Aorta (tissue), 5 donors: ENCODE measurements at regions of chr4 and their contacts with region 1.

Region 1: GRCh38 chr4:55125087-55125721 is at the start of gene KDR:
- DNase-seq: peak; percentile 49 to 80
- ATAC-seq: peak; percentile 86
- H3K4me3 ChIP-seq: peak within 1 kb of the TSS; percentile 35 to 37
- H3K27ac ChIP-seq: no peak within 1 kb of the TSS
- H3K4me1 ChIP-seq: peaks cover 0 to 3% of the 10 kb centered on the region in 2 donors
- H3K27me3 ChIP-seq: no peaks in the 10 kb centered on the region
- total RNA-seq, gene KDR: 18.8 to 42.1 TPM

Region 2: DNA sequence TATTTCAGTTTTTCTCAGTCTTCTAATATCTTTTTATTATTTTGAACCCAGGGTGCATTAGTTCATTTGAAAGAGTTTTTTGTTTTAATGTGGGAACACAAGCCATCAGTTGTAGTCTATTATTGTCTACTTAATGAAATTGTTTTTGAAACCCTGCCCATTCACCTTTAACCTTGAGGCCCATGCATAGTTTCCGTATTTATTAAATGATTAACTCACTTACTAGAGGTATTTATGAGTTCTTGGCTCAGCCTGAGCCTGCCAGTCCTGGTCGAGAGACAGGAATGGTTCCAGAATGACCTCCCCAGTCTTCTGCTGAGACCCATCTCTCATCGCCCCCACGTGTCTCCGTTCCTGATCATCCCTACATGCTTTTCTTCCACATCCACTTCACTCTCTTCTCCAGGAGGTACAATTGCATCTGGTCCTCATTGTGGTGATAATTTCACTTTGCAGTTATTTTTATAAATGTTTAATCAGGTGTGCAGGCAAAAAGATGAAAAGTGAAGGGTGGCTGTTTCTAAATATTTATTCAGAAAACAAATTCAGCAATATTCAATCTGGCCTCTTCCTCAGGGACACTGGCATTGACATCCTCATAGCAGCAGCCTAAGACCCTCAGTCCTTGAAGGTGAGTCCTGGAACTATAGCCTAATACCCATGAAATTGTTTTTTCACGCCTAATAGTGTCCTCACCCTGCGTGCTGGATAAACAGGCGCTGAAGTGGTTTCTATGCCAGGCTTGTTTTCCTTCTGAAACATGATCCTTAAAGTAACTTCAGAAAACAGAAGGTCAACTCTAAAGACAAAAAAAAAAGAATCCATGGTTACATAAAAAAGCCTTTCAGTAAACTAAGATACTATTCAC is 112.6 kb before region 1 on chr4:
- intact Hi-C with region 1: loop called in 1 of 2 experiments (anchors 10 kb)
- DNase-seq: no peak
- ATAC-seq: no peak
- H3K4me3 ChIP-seq: no peak overlapping the region
- H3K27ac ChIP-seq: no peak overlapping the region
- H3K4me1 ChIP-seq: no peaks in the 10 kb centered on the region
- H3K27me3 ChIP-seq: no peaks in the 10 kb centered on the region